Sigmoid colon (tissue), 7 donors: ENCODE measurements at regions of chr7 and their contacts with region 1.

Region 1: GRCh38 chr7:77759294-77759889 is 38.8 kb downstream of the TMEM60 start:
- DNase-seq: no peak
- H3K4me3 ChIP-seq: no peak overlapping the region
- H3K27ac ChIP-seq: peak overlapping the region in 3 of 4 donors; percentile 0 to 43 (median 35)
- H3K4me1 ChIP-seq: peaks cover 0 to 74% (median 31%) of the 10 kb centered on the region in 4 donors
- H3K27me3 ChIP-seq: no peaks in the 10 kb centered on the region
- CTCF ChIP-seq: peak; percentile 66 to 85 (median 80)
- EP300 ChIP-seq: no peak
- POLR2A ChIP-seq: no peak

Region 2: DNA sequence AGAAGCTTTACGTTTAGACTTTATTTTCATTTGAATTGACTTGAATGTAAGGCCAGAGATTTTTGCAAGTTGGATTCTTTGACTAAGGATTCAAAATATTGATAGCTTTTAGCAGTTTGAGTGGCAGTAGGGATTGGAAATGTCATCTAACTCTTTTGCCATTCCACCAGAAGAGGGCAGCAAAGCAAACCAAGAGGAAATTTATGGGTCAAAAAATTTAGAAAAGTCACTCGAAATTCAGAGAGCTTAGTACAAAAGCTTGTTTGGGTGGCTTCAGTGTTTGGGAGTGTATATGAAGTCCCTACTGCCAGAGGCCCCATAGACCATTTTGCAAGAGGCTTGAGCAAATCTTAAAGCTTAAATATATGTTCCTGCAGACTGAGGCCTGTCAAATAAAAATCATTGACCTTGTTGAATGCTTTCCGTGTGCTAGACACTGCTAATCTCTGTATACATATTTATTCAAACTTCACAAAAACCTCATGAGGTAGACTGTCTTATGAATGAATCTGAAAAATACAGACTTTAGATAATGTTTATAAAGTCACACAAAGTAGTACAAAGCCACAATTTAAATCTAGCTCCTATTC is 107.7 kb before region 1 on chr7:
- intact Hi-C with region 1: loop called (anchors 2 kb)
- DNase-seq: no peak
- H3K4me3 ChIP-seq: no peak overlapping the region
- H3K27ac ChIP-seq: no peak overlapping the region
- H3K4me1 ChIP-seq: peaks cover 0 to 16% (median 9%) of the 10 kb centered on the region in 4 donors
- H3K27me3 ChIP-seq: no peaks in the 10 kb centered on the region
- CTCF ChIP-seq: peak in 3 of 4 experiments; percentile 61 to 73 (median 69)
- EP300 ChIP-seq: no peak
- POLR2A ChIP-seq: no peak

Region 3: GRCh38 chr7:77702513-77702912 is 56.9 kb before region 1 on chr7:
- intact Hi-C with region 1: loop called (anchors 10 kb)
- DNase-seq: no peak
- H3K4me3 ChIP-seq: no peak overlapping the region
- H3K27ac ChIP-seq: peak overlapping the region in 3 of 4 donors; percentile 0 to 100 (median 96)
- H3K4me1 ChIP-seq: peaks cover 0 to 68% (median 54%) of the 10 kb centered on the region in 4 donors
- H3K27me3 ChIP-seq: no peaks in the 10 kb centered on the region
- CTCF ChIP-seq: no peak
- EP300 ChIP-seq: no peak
- POLR2A ChIP-seq: no peak